GM23248 (cell line): ENCODE measurements at regions of chr2 and their contacts with region 1.

Region 1: GRCh38 chr2:232348936-232349335 is 29.6 kb upstream of the ALPP start:
- DNase-seq: no peak
- H3K4me3 ChIP-seq: no peak overlapping the region
- H3K27ac ChIP-seq: no peak overlapping the region
- H3K4me1 ChIP-seq: no peaks in the 10 kb centered on the region
- H3K27me3 ChIP-seq: peaks cover 65% of the 10 kb centered on the region

Region 2: DNA sequence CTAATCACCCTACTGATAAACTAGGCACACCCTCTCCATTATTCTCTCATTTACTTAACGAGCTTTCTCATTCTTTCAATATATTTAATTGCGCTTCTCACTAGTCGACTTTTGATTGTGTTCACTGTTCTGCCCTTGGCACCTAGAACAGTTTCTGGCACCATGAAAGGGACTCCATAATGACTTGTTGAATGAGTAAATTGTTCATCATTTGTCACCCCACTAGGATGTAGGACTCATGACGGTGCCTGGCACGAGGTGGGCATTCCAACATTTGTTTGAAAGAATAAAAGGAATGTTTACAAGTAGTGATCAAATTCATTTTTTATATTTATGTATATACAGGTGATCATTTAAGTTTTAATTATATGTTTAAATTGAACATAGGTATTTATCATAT is 263.8 kb before region 1 on chr2:
- in situ Hi-C with region 1: no loop called
- DNase-seq: no peak
- H3K4me3 ChIP-seq: no peak overlapping the region
- H3K27ac ChIP-seq: no peak overlapping the region
- H3K4me1 ChIP-seq: no peaks in the 10 kb centered on the region
- H3K27me3 ChIP-seq: no peaks in the 10 kb centered on the region

Region 3: GRCh38 chr2:232438951-232439757 is 90.2 kb after region 1 on chr2:
- in situ Hi-C with region 1: loop called (anchors 10 kb)
- DNase-seq: no peak
- H3K4me3 ChIP-seq: no peak overlapping the region
- H3K27ac ChIP-seq: no peak overlapping the region
- H3K4me1 ChIP-seq: no peaks in the 10 kb centered on the region
- H3K27me3 ChIP-seq: no peaks in the 10 kb centered on the region; the same call in 1 of the 2 replicates

Region 4: GRCh38 chr2:232473467-232473890 is 124.5 kb after region 1 on chr2:
- in situ Hi-C with region 1: no loop called
- DNase-seq: peak; percentile 24
- H3K4me3 ChIP-seq: no peak overlapping the region
- H3K27ac ChIP-seq: no peak overlapping the region
- H3K4me1 ChIP-seq: no peaks in the 10 kb centered on the region
- H3K27me3 ChIP-seq: peaks cover 59% of the 10 kb centered on the region